Upper lobe of right lung (tissue), 1 donor: ENCODE measurements at regions of chr20 and their contacts with region 1.

Region 1: GRCh38 chr20:32674362-32674789 is 635 bp upstream of the C20orf203 start:
- DNase-seq: no peak
- ATAC-seq: peak; percentile 71
- H3K4me3 ChIP-seq: no peak overlapping the region
- H3K27ac ChIP-seq: no peak overlapping the region
- H3K4me1 ChIP-seq: peaks cover 13% of the 10 kb centered on the region
- H3K27me3 ChIP-seq: no peaks in the 10 kb centered on the region
- CTCF ChIP-seq: peak; percentile 67

Region 2: GRCh38 chr20:32742322-32743236 is 68.2 kb after region 1 on chr20:
- intact Hi-C with region 1: no loop called
- DNase-seq: no peak
- ATAC-seq: peak; percentile 10
- H3K4me3 ChIP-seq: peak overlapping the region; percentile 79
- H3K27ac ChIP-seq: peak overlapping the region; percentile 89
- H3K4me1 ChIP-seq: peaks cover 13% of the 10 kb centered on the region
- H3K27me3 ChIP-seq: no peaks in the 10 kb centered on the region
- CTCF ChIP-seq: no peak

Region 3: DNA sequence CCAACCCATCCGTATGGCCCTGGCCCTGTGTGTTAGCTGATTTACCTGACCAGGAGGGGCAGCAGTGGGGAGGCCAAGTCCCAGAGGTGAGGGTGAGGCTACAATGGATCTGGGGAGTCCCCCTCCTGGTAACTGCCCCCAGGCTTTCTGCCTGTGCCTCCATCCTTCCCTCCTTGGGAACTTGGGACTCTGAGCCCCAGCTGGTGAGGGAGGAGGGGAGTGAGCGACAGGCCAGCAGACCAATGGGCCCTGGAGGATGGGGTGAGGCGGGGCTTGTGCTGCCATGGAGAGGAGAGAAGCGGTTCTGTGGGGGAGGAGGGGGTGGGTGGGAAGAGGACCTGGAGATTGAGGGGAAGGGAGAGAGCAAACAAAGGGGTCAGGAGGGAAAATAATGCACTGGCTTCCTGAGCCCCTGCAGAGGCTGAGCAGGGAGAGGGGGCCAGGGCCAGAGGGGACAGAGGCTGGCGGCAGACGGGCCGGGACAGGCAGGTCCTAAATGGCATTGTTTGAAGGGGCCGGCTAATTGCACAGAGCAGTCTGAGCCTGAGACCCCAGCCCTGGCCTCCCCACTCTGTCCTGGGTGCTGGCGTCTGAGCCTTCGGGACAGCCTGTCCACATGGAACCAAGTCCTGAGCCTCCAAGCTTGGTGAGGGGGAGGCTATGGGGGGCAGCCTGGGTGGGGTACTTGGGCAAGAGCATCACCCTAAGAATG is 105.3 kb after region 1 on chr20:
- intact Hi-C with region 1: loop called (anchors 5 kb)
- DNase-seq: no peak
- ATAC-seq: no peak
- H3K4me3 ChIP-seq: no peak overlapping the region
- H3K27ac ChIP-seq: no peak overlapping the region
- H3K4me1 ChIP-seq: peaks cover 7% of the 10 kb centered on the region
- H3K27me3 ChIP-seq: no peaks in the 10 kb centered on the region
- CTCF ChIP-seq: no peak

Region 4: DNA sequence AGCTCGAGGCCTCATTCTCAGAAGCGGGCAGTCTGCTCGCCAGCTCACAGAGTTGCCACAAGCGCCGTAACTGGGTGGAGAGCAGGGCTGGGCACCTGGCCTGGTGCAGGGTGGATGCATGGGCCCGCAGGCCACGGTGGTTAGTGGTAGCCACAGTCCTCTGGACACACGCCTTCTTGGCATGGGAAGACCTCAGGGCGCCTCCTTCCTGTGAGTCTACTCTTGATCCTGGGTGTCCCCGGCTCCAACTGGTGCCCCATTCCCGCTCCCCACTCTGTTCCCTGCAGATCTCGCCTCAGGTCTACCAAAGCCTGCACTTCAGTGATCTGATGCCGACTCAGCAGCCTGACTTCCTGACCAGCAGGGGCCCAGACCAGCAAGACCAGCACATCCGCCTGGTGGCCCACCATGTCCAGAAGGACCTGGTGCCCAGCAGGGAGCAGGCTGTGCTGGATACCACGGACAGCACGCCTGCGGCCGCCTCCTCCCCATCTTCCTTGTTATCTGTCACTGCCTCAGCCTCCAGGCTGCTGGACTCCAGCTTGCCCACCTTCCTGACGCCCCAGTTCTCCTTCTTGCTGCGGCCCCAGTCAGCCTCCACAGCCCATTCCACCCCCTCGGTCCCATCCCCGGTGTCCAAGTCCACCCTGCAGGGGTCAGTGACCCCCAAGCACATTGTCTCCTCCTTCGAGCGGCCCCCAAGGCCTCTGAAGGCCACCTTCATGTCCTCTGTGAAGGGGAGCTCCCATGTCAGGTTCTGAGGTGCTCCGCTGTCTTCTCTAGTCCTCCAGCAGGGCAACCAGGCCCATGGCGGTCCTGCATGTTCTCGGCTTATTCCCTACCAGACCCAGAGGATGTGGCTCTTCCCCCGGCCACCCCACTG is 286.7 kb after region 1 on chr20:
- intact Hi-C with region 1: no loop called
- DNase-seq: peak; percentile 54
- ATAC-seq: no peak
- H3K4me3 ChIP-seq: no peak overlapping the region
- H3K27ac ChIP-seq: no peak overlapping the region
- H3K4me1 ChIP-seq: no peaks in the 10 kb centered on the region
- H3K27me3 ChIP-seq: no peaks in the 10 kb centered on the region
- CTCF ChIP-seq: no peak